Ovary (tissue), 10 donors: ENCODE measurements at regions of chr11 and their contacts with region 1.

Region 1: DNA sequence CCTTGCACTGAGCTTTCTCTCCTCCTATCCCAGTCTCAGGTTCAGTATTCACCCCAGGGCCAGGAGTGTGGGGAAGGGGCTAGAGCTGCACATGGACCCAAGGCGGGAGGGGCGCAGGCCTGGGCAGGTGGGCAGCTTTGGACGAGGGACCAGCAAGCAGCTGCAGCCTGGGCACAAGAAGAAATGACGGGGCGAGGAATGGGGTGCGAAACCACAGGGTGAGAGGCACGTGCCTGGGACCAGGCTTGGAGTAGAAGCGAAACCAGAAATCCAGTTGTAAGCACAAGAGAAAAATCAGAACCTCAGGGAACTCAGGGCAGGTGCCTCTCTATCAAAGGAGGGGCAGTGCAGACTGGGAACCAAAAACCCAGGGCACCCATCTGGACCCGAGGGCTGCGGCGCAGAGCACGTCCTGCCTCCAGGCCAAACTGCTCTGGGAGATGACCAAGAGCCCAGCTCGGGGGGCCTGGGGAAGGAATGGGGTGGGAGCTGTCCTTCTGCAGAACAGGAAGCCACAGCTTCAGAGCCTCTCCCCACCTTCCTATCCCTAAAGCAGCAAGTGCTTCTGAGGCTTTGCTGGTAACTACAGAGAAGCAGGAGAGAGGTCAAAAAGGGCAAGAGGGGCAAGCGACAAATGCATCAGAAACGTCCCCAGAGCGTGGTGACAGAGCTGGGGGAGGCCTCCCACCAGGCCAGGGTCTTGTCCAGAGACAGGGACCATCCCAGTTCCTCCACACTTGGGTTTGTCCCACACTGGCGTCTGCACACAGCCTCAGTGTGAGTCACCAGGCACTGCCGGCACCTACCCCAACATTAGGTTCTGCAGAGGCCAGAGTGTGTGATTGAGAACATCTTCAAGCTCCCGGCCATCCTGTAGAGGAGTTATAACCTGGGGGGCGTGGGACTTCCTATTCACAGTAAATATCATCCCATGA is 18.3 kb upstream of the TMPRSS4 start:
- DNase-seq: no peak
- H3K4me3 ChIP-seq: no peak overlapping the region
- H3K27ac ChIP-seq: no peak overlapping the region
- H3K4me1 ChIP-seq: no peaks in the 10 kb centered on the region
- H3K27me3 ChIP-seq: no peaks in the 10 kb centered on the region
- CTCF ChIP-seq: no peak
- EP300 ChIP-seq: no peak
- POLR2A ChIP-seq: no peak

Region 2: GRCh38 chr11:117796872-117797529 is 261.6 kb before region 1 on chr11 and contains the start of gene DSCAML1:
- intact Hi-C with region 1: loop called in 1 of 4 experiments (anchors 5 kb)
- DNase-seq: peak in 3 of 5 donors; percentile 21 to 61 (median 40)
- H3K4me3 ChIP-seq: peak within 1 kb of the TSS; percentile 17
- H3K27ac ChIP-seq: no peak within 1 kb of the TSS
- H3K4me1 ChIP-seq: peaks cover 7% of the 10 kb centered on the region
- H3K27me3 ChIP-seq: no peaks in the 10 kb centered on the region
- CTCF ChIP-seq: no peak
- EP300 ChIP-seq: no peak
- POLR2A ChIP-seq: no peak
- total RNA-seq, gene DSCAML1: 2.3 to 16.5 (median 12.7) TPM

Region 3: GRCh38 chr11:118033443-118033842 is 25.1 kb before region 1 on chr11:
- intact Hi-C with region 1: no loop called
- DNase-seq: no peak
- H3K4me3 ChIP-seq: no peak overlapping the region
- H3K27ac ChIP-seq: no peak overlapping the region
- H3K4me1 ChIP-seq: no peaks in the 10 kb centered on the region
- H3K27me3 ChIP-seq: no peaks in the 10 kb centered on the region
- CTCF ChIP-seq: no peak
- EP300 ChIP-seq: no peak
- POLR2A ChIP-seq: no peak

Region 4: DNA sequence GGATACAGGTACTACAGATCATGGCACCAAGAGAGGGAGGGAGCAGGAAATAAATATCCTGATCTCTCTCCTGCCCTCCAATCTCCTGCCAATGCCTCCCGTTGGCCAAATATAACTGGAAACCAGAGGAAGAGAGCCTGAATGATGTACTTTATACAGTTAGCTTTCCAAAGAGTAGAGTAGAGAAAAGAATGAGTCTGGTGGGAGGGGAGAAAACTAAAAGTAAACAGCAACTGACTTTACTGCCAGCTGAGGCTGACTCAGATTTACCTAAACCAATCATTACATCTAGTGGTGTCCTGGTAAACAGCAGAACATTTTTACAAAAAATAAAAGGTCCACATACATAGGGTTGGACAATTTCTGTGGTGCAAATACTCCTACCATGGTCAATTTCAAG is 188.5 kb after region 1 on chr11:
- intact Hi-C with region 1: no loop called
- DNase-seq: no peak
- H3K4me3 ChIP-seq: no peak overlapping the region
- H3K27ac ChIP-seq: no peak overlapping the region
- H3K4me1 ChIP-seq: no peaks in the 10 kb centered on the region
- H3K27me3 ChIP-seq: no peaks in the 10 kb centered on the region
- CTCF ChIP-seq: no peak
- EP300 ChIP-seq: no peak
- POLR2A ChIP-seq: no peak